Activated CD4-positive, alpha-beta T cell treated with anti-CD3 and anti-CD28 coated beads for 36 hours (primary cell): ENCODE measurements at regions of chr7 and their contacts with region 1.

Region 1: DNA sequence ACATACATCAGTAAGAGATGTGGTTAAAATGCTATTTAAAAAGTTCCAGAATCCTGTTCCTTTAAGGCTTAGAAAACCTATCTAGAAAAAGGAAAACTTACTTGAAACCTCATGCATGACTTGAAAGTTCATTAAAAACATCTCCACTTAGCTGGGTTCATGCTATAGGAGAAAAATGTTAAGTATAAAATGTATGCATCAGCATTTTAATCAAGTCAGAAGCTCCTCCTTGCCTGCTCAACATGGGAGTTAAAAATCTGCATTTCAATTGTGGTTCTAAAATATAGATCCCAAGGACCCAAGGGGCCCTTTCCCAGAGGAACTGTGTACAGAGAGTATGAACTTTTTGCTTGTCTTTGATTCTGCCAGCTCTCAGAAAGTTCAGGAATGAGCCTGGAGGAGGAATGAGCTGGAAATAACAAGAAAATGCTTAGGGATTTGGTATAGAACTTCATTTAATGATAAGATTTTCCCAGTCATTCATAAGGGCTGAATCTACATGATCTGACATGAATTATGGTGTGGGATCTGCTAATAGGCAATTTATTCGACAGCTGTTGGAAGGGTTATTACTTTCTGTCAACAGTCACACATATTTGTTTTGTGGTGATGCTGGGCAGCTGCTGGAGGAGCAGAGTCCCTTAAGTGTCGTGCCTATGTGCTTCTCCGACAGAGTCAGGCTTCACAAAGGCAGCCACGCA is 85.6 kb upstream of the MTPN start:
- DNase-seq: no peak
- ATAC-seq: no peak
- H3K4me3 Mint-ChIP-seq: no peak overlapping the region
- H3K27ac Mint-ChIP-seq: no peak overlapping the region
- H3K4me1 Mint-ChIP-seq: peaks cover 17% of the 10 kb centered on the region
- H3K27me3 Mint-ChIP-seq: peaks cover 3% of the 10 kb centered on the region

Region 2: DNA sequence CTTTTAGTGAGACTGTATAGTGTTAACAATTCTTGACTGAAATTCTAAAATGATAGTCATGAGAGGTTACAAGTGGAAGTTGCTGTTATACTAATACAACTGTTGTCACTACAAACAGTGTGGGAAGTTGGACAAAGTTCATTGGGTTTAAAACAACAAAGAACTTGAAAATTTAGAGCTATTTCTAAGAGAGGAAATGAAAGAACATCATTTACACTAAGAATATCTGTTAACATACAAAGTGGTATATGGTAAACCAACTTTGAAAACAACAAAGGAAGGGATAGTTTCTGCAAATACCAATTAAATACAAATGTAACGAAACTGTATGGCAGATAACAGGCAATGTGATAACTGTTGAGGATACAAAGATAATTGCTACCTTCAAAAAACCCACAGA is 97.2 kb before region 1 on chr7:
- CTCF ChIA-PET with region 1: no interaction called
- POLR2A ChIA-PET with region 1: no interaction called
- intact Hi-C with region 1: no loop called
- DNase-seq: no peak
- ATAC-seq: no peak
- H3K4me3 Mint-ChIP-seq: no peak overlapping the region
- H3K27ac Mint-ChIP-seq: no peak overlapping the region
- H3K4me1 Mint-ChIP-seq: peaks cover 69% of the 10 kb centered on the region
- H3K27me3 Mint-ChIP-seq: no peaks in the 10 kb centered on the region

Region 3: DNA sequence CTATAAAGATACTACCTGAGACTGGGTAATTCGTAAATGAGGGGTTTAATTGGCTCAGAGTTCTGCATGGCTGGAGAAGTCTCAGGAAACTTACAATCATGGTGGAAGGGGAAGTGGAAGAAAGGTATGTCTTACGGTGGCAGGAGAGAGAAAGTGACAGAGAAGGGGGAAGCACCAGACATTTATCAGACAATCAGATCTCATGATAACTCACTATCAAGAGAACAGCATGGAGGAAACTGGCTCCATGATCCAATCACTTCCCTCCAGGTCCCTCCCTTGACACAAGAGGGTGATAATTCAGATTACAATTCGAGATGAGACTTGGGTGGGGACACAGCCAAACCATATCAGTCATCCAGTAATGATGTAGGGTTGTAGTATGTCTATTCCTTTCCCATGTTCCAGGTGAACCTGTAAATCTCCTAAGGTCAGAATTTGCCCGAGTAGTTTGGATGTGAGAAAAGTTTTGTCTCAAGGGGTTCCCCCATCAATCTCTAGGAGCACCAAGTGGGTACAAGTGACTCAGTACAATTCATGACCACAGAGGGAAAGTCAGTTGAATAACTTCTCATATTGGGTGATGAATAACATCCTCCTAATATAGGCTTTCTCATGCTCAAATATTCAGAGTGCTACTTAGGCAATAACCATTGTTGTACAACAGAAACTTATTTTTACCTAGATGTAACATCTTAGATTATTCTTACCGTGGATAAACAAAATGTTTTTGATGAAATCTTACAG is 46.0 kb before region 1 on chr7:
- CTCF ChIA-PET with region 1: no interaction called
- POLR2A ChIA-PET with region 1: no interaction called
- intact Hi-C with region 1: loop called (anchors 1 kb)
- DNase-seq: peak; percentile 15
- ATAC-seq: peak; percentile 92
- H3K4me3 Mint-ChIP-seq: no peak overlapping the region
- H3K27ac Mint-ChIP-seq: peak overlapping the region; percentile 21
- H3K4me1 Mint-ChIP-seq: peaks cover 21% of the 10 kb centered on the region
- H3K27me3 Mint-ChIP-seq: peaks cover 20% of the 10 kb centered on the region

Region 4: DNA sequence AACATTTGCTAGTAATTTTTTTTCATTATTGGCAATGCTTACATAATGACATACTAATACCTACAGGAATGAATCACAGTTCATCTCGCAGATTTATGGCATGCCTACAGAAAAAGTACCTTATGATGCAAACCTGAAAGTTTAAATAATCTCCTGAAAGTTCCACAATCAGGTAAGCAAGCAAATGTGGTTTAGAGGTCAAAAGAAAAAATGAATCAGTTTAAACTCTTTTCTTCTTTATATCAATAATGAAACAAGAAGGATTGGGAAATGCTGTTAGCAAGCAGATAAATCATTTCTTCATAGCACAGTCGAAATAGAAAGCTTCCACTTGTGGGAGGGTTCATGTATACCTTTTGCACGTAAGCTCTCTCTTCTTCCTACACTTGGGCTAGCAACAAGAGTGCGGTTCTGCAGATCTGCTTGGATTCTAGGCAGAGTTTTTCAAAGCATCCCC is 31.9 kb before region 1 on chr7:
- CTCF ChIA-PET with region 1: interaction called, 3 read pairs
- POLR2A ChIA-PET with region 1: interaction called, 4 read pairs
- intact Hi-C with region 1: loop called (anchors 1 kb)
- DNase-seq: peak; percentile 37
- ATAC-seq: peak; percentile 83
- H3K4me3 Mint-ChIP-seq: peak overlapping the region; percentile 3
- H3K27ac Mint-ChIP-seq: peak overlapping the region; percentile 86
- H3K4me1 Mint-ChIP-seq: peaks cover 64% of the 10 kb centered on the region
- H3K27me3 Mint-ChIP-seq: peaks cover 13% of the 10 kb centered on the region

Region 5: GRCh38 chr7:136130819-136131643 is 68.3 kb after region 1 on chr7:
- CTCF ChIA-PET with region 1: no interaction called
- POLR2A ChIA-PET with region 1: no interaction called
- intact Hi-C with region 1: loop called in 1 of 2 experiments (anchors 2 kb)
- DNase-seq: no peak
- ATAC-seq: peak; percentile 49
- H3K4me3 Mint-ChIP-seq: no peak overlapping the region
- H3K27ac Mint-ChIP-seq: no peak overlapping the region
- H3K4me1 Mint-ChIP-seq: no peaks in the 10 kb centered on the region
- H3K27me3 Mint-ChIP-seq: no peaks in the 10 kb centered on the region

Region 6: DNA sequence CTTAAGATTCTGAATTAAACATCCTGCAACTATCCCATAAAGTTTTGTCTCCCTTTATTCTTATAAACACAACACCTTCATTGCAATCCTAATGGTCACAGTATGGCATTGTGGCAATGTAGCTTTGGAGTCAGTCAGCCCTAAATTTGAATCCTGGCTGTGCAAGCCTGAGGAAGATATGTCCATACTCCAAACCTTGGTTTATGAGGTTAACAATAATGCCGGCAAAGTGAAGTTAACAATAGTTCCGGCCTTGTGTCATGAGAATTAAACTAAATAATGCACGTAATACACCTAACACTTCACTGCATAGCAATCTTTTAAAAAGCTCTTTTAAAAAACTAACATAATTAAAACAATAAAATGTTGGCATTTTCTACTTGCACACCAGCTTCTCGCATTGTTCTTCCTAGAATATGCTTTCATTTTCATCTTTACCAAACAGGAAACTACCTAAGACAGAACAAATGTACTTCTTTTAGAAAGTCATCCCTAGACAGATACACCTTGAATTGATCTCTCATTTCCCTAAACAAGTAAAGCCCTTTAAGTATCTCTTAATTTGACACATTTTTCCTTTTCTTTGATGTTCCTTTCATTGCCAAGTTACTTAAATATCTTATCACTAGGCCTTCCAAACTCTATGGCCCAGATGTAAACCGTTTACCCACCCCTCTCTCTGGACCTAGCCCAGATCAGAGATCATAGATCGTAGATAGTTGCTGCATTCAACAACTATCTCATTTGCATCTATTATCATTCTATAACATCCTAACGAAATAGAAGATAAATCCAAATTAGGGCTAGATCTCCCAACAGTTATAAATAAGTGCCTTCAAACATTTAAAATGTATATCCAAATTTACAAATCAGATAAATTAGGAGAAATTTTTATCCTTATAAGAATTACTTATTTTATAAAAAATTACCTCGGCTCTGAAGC is 1872.4 kb after region 1 on chr7:
- CTCF ChIA-PET with region 1: no interaction called
- POLR2A ChIA-PET with region 1: no interaction called
- intact Hi-C with region 1: loop called in 1 of 2 experiments (anchors 10 kb)
- DNase-seq: no peak
- ATAC-seq: peak; percentile 89
- H3K4me3 Mint-ChIP-seq: peak overlapping the region; percentile 72
- H3K27ac Mint-ChIP-seq: peak overlapping the region; percentile 88
- H3K4me1 Mint-ChIP-seq: peaks cover 47% of the 10 kb centered on the region
- H3K27me3 Mint-ChIP-seq: no peaks in the 10 kb centered on the region